ENCODE measurements at regions of chr19 and their contacts with region 1.

Region 1: GRCh38 chr19:1812469-1813196 is 557 bp upstream of the ATP8B3 start:
- DNase-seq: peak; percentile 96
- H3K4me3 ChIP-seq: peak overlapping the region; percentile 69
- H3K27ac ChIP-seq: peak overlapping the region; percentile 67
- H3K4me1 ChIP-seq: peaks cover 18% of the 10 kb centered on the region
- CTCF ChIP-seq: peak; percentile 87

Region 2: GRCh38 chr19:1605236-1606137 is 207.1 kb before region 1 on chr19 and contains the start of gene UQCR11:
- CTCF ChIA-PET with region 1: no interaction called
- POLR2A ChIA-PET with region 1: no interaction called
- intact Hi-C with region 1: loop called (anchors 5 kb)
- DNase-seq: peak; percentile 97
- H3K4me3 ChIP-seq: peak within 1 kb of the TSS; percentile 100
- H3K27ac ChIP-seq: peak within 1 kb of the TSS; percentile 88
- H3K4me1 ChIP-seq: peaks cover 50% of the 10 kb centered on the region
- CTCF ChIP-seq: peak; percentile 73
- total RNA-seq, gene UQCR11: 85.3 and 86.2 TPM in 2 replicates

Region 3: GRCh38 chr19:1774999-1775772 is 37.4 kb before region 1 on chr19:
- CTCF ChIA-PET with region 1: no interaction called
- POLR2A ChIA-PET with region 1: no interaction called
- intact Hi-C with region 1: loop called (anchors 1 kb)
- DNase-seq: peak; percentile 29
- H3K4me3 ChIP-seq: no peak overlapping the region
- H3K27ac ChIP-seq: no peak overlapping the region
- H3K4me1 ChIP-seq: no peaks in the 10 kb centered on the region
- CTCF ChIP-seq: peak; percentile 89

Region 4: GRCh38 chr19:1905071-1905862 is 92.6 kb after region 1 on chr19 and contains the starts of genes ADAT3 and SCAMP4:
- CTCF ChIA-PET with region 1: no interaction called
- POLR2A ChIA-PET with region 1: no interaction called
- intact Hi-C with region 1: no loop called
- DNase-seq: peak; percentile 99
- H3K4me3 ChIP-seq: peak within 1 kb of the TSS; percentile 71
- H3K27ac ChIP-seq: peak within 1 kb of the TSS; percentile 97
- H3K4me1 ChIP-seq: peaks cover 32% of the 10 kb centered on the region
- CTCF ChIP-seq: no peak
- total RNA-seq, gene ADAT3: 5.6 and 7.9 TPM in 2 replicates
- total RNA-seq, gene SCAMP4: 13.4 and 21.3 TPM in 2 replicates

Measured in OCI-LY7 (cell line).